ENCODE measurements at regions of chr7 and their contacts with region 1.

Region 1: DNA sequence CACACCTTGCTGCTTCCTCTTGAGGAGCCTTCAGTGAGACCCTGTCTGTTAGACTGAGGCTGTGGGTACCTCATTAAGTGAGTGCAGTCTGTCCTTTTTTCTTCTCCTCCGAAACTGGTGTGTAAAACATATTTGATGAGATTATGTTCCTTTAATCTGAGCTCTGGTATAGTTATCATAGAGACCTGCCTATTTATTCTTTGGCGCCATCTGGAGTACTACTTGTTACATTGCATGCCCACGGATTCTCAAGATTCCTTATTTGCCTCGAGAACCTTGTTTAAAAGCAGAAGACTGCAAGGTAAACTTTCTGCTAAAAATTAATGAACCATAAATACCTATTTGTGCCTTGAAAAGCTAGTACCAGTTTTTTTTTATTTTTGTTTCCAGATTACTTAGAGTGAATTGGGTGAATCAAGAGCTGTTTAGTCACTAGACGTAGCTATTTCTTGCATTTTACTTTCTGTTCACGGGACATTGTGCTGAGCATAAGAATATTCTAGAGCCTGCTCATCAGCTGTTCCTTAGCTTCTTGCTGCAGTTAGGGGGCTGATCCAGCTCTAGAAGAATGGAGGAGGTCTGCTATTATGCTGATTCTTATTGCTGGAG is 16.9 kb upstream of the STMP1 start:
- DNase-seq: peak; percentile 65
- H3K4me3 ChIP-seq: no peak overlapping the region
- H3K27ac ChIP-seq: no peak overlapping the region
- H3K4me1 ChIP-seq: no peaks in the 10 kb centered on the region
- H3K27me3 ChIP-seq: no peaks in the 10 kb centered on the region
- CTCF ChIP-seq: peak; percentile 68

Region 2: DNA sequence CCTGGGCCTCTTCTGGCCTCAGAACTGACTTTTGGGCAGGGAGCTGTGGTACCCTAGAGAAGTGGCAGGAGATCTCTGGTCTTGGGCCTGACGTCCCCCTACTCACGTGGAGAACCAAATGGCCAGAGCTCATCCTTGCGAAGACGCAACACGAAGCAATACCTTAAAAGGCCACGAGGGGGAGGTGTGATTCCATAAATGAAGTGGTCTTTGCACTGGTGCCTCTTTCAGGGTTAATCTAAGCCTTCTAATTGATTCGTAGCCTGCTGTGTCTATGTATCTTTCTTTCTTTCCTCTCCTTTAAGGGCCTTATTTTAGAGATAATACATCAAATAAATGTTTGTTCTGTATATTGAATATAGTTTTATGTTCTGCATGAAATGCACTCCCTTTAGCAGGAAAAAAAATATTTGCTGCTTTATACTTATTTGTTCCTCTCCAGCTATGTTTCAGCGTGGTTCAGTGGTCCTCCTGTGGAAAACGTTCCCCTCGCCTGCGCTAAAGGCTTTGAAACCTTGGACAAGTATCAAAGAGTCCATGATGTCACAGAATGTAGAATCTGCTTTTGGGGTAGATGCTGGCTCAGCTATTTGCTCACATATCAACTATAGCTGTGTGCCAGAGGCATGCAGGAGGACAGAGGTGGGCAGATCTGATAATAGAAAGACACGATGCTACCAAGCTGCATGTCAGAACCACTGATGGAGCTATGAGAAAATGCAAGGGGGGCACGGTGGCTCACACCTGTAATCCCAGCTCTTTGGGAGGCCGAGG is 370.7 kb before region 1 on chr7:
- CTCF ChIA-PET with region 1: interaction called, 11 read pairs
- POLR2A ChIA-PET with region 1: no interaction called
- intact Hi-C with region 1: no loop called
- DNase-seq: peak; percentile 88
- H3K4me3 ChIP-seq: no peak overlapping the region
- H3K27ac ChIP-seq: no peak overlapping the region
- H3K4me1 ChIP-seq: no peaks in the 10 kb centered on the region
- H3K27me3 ChIP-seq: no peaks in the 10 kb centered on the region
- CTCF ChIP-seq: peak; percentile 87

Measured in A673 (cell line).